ENCODE measurements at regions of chr15 and their contacts with region 1.

Region 1: DNA sequence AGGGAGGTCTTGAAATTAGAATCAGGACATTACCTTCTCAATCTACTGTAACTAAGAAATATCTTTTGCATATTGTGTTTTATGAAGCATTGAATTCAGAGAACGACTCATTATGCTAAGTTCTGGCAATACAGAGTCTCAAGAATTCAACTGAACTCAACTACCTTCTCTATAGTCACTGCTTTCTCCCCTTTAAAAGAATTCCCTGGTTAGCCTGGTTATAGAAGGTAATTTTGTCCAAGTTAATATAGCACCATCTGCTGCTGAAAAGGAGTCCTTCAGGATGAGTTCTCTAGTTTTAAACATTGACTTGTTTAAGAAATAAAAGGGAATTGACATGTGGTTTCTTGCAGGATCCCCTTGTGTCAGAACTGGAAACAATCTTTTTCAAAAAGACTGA is 60.2 kb downstream of the IL16 start:
- DNase-seq: no peak
- ATAC-seq: no peak
- H3K4me3 ChIP-seq: no peak overlapping the region
- H3K27ac ChIP-seq: no peak overlapping the region
- H3K4me1 ChIP-seq: no peaks in the 10 kb centered on the region
- H3K27me3 ChIP-seq: peaks cover 3 to 4% of the 10 kb centered on the region in 2 experiments; a peak in 2 of 4 replicates
- CTCF ChIP-seq: peak in 2 of 3 experiments; percentile 12 to 25; a peak in 2 of 6 replicates
- EP300 ChIP-seq: no peak
- POLR2A ChIP-seq: no peak
- RAD21 ChIP-seq: peak; percentile 44

Region 2: GRCh38 chr15:81155375-81156218 is 101.3 kb before region 1 on chr15:
- CTCF ChIA-PET with region 1: interaction called, 249 read pairs
- POLR2A ChIA-PET with region 1: interaction called, 3 read pairs
- RAD21 ChIA-PET with region 1: interaction called, 5 read pairs
- SMC1A ChIA-PET with region 1: interaction called, 4 read pairs
- in situ Hi-C with region 1: no loop called
- intact Hi-C with region 1: no loop called
- DNase-seq: no peak
- ATAC-seq: peak; percentile 76
- H3K4me3 ChIP-seq: no peak overlapping the region
- H3K27ac ChIP-seq: no peak overlapping the region
- H3K4me1 ChIP-seq: no peaks in the 10 kb centered on the region
- H3K27me3 ChIP-seq: peaks cover 0 to 2% of the 10 kb centered on the region in 2 experiments; a peak in 1 of 4 replicates
- CTCF ChIP-seq: peak; percentile 55 to 63 (median 58); a peak in 5 of 6 replicates
- EP300 ChIP-seq: no peak
- POLR2A ChIP-seq: no peak
- RAD21 ChIP-seq: peak; percentile 66